SK-N-SH (cell line): ENCODE measurements at regions of chr7 and their contacts with region 1.

Region 1: GRCh38 chr7:38057829-38058228 is 120.2 kb upstream of the STARD3NL start:
- DNase-seq: no peak
- H3K4me3 ChIP-seq: no peak overlapping the region
- H3K27ac ChIP-seq: no peak overlapping the region
- H3K4me1 ChIP-seq: peaks cover 0 to 9% of the 10 kb centered on the region in 2 experiments; a peak in 2 of 4 replicates
- H3K27me3 ChIP-seq: no peaks in the 10 kb centered on the region
- CTCF ChIP-seq: no peak
- EP300 ChIP-seq: no peak
- RAD21 ChIP-seq: no peak

Region 2: DNA sequence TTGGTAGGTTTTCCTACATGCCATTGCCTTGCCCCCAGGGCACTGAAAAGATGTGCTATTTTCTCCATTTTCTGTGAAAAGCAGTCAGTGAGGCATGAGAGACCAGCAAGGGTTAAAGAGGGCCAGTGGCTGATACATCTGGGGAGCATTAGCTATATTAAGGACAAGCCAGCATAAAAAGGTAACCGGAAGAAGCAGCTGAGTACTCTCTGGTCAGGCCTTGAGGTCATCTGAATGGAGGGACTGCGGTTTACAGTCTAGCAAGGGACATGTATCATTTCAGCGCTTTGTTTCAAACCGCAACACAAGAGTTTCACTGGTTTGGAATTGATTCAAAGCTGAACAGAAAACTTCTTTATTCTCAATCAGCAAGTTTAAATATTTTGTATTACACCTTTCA is 17.0 kb before region 1 on chr7:
- CTCF ChIA-PET with region 1: no interaction called
- POLR2A ChIA-PET with region 1: no interaction called
- DNase-seq: peak; percentile 57
- H3K4me3 ChIP-seq: no peak overlapping the region
- H3K27ac ChIP-seq: peak overlapping the region in 1 of 2 experiments; percentile 30; a peak in 2 of 4 replicates
- H3K4me1 ChIP-seq: peaks cover 0 to 7% of the 10 kb centered on the region in 2 experiments; a peak in 2 of 4 replicates
- H3K27me3 ChIP-seq: no peaks in the 10 kb centered on the region
- CTCF ChIP-seq: no peak
- EP300 ChIP-seq: no peak
- RAD21 ChIP-seq: no peak

Region 3: GRCh38 chr7:38070718-38071117 is 12.9 kb after region 1 on chr7:
- CTCF ChIA-PET with region 1: interaction called, 20 read pairs
- POLR2A ChIA-PET with region 1: no interaction called
- DNase-seq: peak; percentile 73
- H3K4me3 ChIP-seq: no peak overlapping the region
- H3K27ac ChIP-seq: peak overlapping the region in 1 of 2 experiments; percentile 69; a peak in 2 of 4 replicates
- H3K4me1 ChIP-seq: no peaks in the 10 kb centered on the region; a peak in 1 of 4 replicates
- H3K27me3 ChIP-seq: no peaks in the 10 kb centered on the region
- CTCF ChIP-seq: peak; percentile 69
- EP300 ChIP-seq: peak in 1 of 2 experiments; percentile 72; a peak in 2 of 4 replicates
- RAD21 ChIP-seq: peak; percentile 54